ENCODE measurements at regions of chr22 and their contacts with region 1.

Region 1: GRCh38 chr22:44625981-44626687 is 75.9 kb upstream of the PRR5 start:
- DNase-seq: peak; percentile 64 to 84 (median 78)
- H3K4me3 ChIP-seq: no peak overlapping the region
- H3K27ac ChIP-seq: no peak overlapping the region
- H3K4me1 ChIP-seq: no peaks in the 10 kb centered on the region
- H3K27me3 ChIP-seq: no peaks in the 10 kb centered on the region
- CTCF ChIP-seq: peak; percentile 91 to 99 (median 99)
- EP300 ChIP-seq: no peak
- POLR2A ChIP-seq: no peak

Region 2: GRCh38 chr22:43993027-43993760 is 632.9 kb before region 1 on chr22:
- intact Hi-C with region 1: loop called (anchors 2 to 5 kb)
- DNase-seq: peak; percentile 51 to 78 (median 64)
- H3K4me3 ChIP-seq: no peak overlapping the region
- H3K27ac ChIP-seq: no peak overlapping the region
- H3K4me1 ChIP-seq: peaks cover under 1% of the 10 kb centered on the region
- H3K27me3 ChIP-seq: no peaks in the 10 kb centered on the region
- CTCF ChIP-seq: peak; percentile 84 to 89 (median 85)
- EP300 ChIP-seq: no peak
- POLR2A ChIP-seq: no peak

Region 3: GRCh38 chr22:44701824-44702478 is 75.8 kb after region 1 on chr22 and contains the start of gene PRR5:
- intact Hi-C with region 1: no loop called
- DNase-seq: peak; percentile 79 to 89 (median 87)
- H3K4me3 ChIP-seq: peak within 1 kb of the TSS; percentile 51
- H3K27ac ChIP-seq: peak within 1 kb of the TSS; percentile 27 to 43
- H3K4me1 ChIP-seq: peaks cover 13% of the 10 kb centered on the region
- H3K27me3 ChIP-seq: no peaks in the 10 kb centered on the region
- CTCF ChIP-seq: no peak
- EP300 ChIP-seq: no peak
- POLR2A ChIP-seq: no peak
- total RNA-seq, gene PRR5: 6.7 to 21.1 (median 16.8) TPM

Region 4: DNA sequence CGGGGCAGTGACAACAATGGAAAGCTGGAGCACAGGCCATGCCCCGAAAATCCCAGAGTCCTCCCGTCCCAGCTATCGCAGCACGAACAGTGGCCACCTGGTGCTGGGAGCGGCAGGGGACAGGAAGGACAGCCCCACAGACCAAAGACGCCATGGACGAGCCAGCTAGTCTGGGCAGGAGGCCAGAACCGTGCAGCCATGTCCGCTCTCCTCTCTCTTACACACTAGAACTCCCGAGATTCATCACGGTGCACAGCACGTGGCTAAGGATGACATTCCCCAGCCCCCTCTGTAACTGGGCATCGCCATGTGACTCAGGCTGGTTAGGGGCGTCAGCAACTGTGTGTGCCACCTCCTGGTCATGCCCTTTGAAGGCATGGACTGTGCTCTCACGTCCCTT is 1619.4 kb after region 1 on chr22:
- intact Hi-C with region 1: no loop called
- DNase-seq: peak in 2 of 5 donors; percentile 38 to 40
- H3K4me3 ChIP-seq: no peak overlapping the region
- H3K27ac ChIP-seq: no peak overlapping the region
- H3K4me1 ChIP-seq: peaks cover 11% of the 10 kb centered on the region
- H3K27me3 ChIP-seq: no peaks in the 10 kb centered on the region
- CTCF ChIP-seq: no peak
- EP300 ChIP-seq: no peak
- POLR2A ChIP-seq: no peak

Measured in ovary (tissue), 10 donors.